PC-9 (cell line): ENCODE measurements at regions of chr11 and their contacts with region 1.

Region 1: GRCh38 chr11:35485656-35486322 is 39.6 kb downstream of the PAMR1 start:
- DNase-seq: peak; percentile 68 to 83
- H3K4me3 ChIP-seq: no peak overlapping the region
- H3K27ac ChIP-seq: no peak overlapping the region
- H3K4me1 ChIP-seq: no peaks in the 10 kb centered on the region
- H3K27me3 ChIP-seq: no peaks in the 10 kb centered on the region
- CTCF ChIP-seq: peak; percentile 96

Region 2: DNA sequence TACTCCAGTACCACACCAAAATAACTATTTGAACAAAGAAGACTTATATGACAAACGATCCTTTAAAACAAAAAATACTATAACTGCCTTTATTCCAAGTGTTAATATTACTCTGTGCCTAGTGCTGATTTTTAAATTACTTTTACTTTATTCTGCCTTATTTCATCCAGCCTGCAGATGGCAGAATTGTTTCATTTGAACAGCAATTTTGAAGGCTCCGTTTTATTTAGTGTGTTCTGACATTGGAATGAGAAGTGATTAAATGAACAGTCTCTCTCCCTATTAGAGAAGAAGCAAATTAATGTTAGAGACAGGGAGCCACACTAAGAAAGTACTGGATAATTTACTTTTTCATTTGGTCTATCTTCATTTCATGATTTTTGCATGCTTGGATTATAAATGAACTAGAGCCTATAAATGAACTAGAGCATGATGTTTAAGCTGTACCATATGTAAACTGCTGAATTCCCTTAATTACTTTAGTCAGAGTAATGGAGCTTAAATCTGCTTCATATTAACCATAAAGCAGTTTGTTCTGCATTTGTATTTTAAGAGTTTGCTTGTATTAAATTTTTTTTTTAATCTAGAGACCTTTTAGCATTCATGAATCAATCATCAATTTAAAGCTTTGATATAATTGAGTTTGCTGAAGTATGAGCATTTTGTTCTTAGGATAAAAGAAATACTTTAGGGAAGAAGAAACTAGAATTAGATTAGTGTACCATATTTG is 559.5 kb before region 1 on chr11:
- CTCF ChIA-PET with region 1: no interaction called
- POLR2A ChIA-PET with region 1: no interaction called
- intact Hi-C with region 1: loop called (anchors 1 kb)
- DNase-seq: peak; percentile 8 to 50
- H3K4me3 ChIP-seq: no peak overlapping the region
- H3K27ac ChIP-seq: no peak overlapping the region
- H3K4me1 ChIP-seq: peaks cover 13% of the 10 kb centered on the region
- H3K27me3 ChIP-seq: no peaks in the 10 kb centered on the region
- CTCF ChIP-seq: peak; percentile 94

Region 3: GRCh38 chr11:35464308-35464707 is 21.5 kb before region 1 on chr11:
- CTCF ChIA-PET with region 1: no interaction called
- POLR2A ChIA-PET with region 1: no interaction called
- intact Hi-C with region 1: loop called (anchors 1 kb)
- DNase-seq: no peak
- H3K4me3 ChIP-seq: no peak overlapping the region
- H3K27ac ChIP-seq: no peak overlapping the region
- H3K4me1 ChIP-seq: no peaks in the 10 kb centered on the region
- H3K27me3 ChIP-seq: peaks cover 12% of the 10 kb centered on the region; the same call in 1 of the 2 replicates
- CTCF ChIP-seq: peak; percentile 51; the same call in 1 of the 2 replicates

Region 4: DNA sequence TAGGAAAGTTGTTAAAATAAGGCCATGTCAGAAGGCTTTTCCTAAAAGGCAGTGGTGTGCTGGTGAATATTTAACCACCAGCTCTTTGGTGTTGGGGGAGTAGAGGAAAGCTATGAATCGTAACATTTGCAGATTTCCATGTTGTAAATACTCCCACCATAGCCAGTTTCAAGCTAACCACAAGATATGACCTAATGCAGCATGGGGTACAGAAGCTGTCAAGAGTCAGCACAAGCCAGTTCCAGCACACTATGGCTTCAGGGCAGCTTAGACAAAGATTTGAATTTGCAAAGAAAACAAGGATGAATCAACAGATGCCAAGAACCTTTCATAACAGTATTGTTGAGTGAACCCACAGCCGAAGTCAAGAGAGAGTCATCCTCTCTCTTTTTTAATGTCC is 763.5 kb after region 1 on chr11:
- CTCF ChIA-PET with region 1: no interaction called
- POLR2A ChIA-PET with region 1: no interaction called
- intact Hi-C with region 1: loop called (anchors 5 kb)
- DNase-seq: peak in 1 of 2 experiments; percentile 62
- H3K4me3 ChIP-seq: no peak overlapping the region
- H3K27ac ChIP-seq: no peak overlapping the region
- H3K4me1 ChIP-seq: peaks cover 11% of the 10 kb centered on the region
- H3K27me3 ChIP-seq: no peaks in the 10 kb centered on the region
- CTCF ChIP-seq: no peak

Region 5: GRCh38 chr11:36265793-36266628 is 780.2 kb after region 1 on chr11:
- CTCF ChIA-PET with region 1: interaction called, 5 read pairs
- POLR2A ChIA-PET with region 1: no interaction called
- intact Hi-C with region 1: loop called (anchors 2 kb)
- DNase-seq: peak; percentile 46 to 63
- H3K4me3 ChIP-seq: no peak overlapping the region
- H3K27ac ChIP-seq: no peak overlapping the region
- H3K4me1 ChIP-seq: no peaks in the 10 kb centered on the region
- H3K27me3 ChIP-seq: no peaks in the 10 kb centered on the region
- CTCF ChIP-seq: peak; percentile 97